ENCODE measurements at regions of chr7 and their contacts with region 1.

Region 1: GRCh38 chr7:92423710-92424131 is 23.6 kb upstream of the GATAD1 start:
- DNase-seq: no peak
- H3K27ac ChIP-seq: no peak overlapping the region
- CTCF ChIP-seq: no peak

Region 2: GRCh38 chr7:92447345-92448204 is 23.9 kb after region 1 on chr7 and contains the start of gene GATAD1:
- CTCF ChIA-PET with region 1: interaction called, 11 read pairs
- POLR2A ChIA-PET with region 1: no interaction called
- DNase-seq: peak; percentile 93
- H3K27ac ChIP-seq: peak within 1 kb of the TSS; percentile 87
- CTCF ChIP-seq: peak; percentile 96

Region 3: GRCh38 chr7:92634924-92635519 is 211.3 kb after region 1 on chr7:
- CTCF ChIA-PET with region 1: no interaction called
- POLR2A ChIA-PET with region 1: no interaction called
- DNase-seq: peak; percentile 49
- H3K27ac ChIP-seq: no peak overlapping the region
- CTCF ChIP-seq: no peak

Region 4: GRCh38 chr7:92661651-92662050 is 237.9 kb after region 1 on chr7:
- CTCF ChIA-PET with region 1: no interaction called
- POLR2A ChIA-PET with region 1: no interaction called
- DNase-seq: no peak
- H3K27ac ChIP-seq: no peak overlapping the region
- CTCF ChIP-seq: no peak

Region 5: GRCh38 chr7:93559639-93560491 is 1136.1 kb after region 1 on chr7:
- CTCF ChIA-PET with region 1: interaction called, 10 read pairs
- POLR2A ChIA-PET with region 1: no interaction called
- DNase-seq: no peak
- H3K27ac ChIP-seq: no peak overlapping the region
- CTCF ChIP-seq: no peak

Measured in RWPE1 (cell line).